Calu3 (cell line): ENCODE measurements at regions of chr22 and their contacts with region 1.

Region 1: DNA sequence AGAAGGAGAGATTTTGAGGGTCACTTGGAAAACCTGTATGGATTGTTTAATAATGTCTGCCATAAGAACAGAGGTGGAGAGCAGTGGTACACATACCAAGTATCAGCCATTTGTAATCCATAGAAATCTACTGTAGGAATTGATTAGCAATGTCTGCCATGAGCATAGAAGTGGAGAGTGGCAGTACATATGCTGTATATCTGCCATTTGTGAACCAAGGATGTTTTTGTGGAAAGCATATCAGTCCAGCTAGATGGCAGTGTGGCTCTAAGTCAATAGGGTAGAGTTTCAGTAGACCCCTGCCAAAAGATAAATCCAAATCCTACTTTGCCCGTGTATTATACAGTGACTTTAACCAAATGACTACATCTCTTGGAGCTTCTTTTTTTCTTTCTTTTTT is 82.9 kb upstream of the SEZ6L start:
- DNase-seq: no peak
- H3K4me3 Mint-ChIP-seq: no peak overlapping the region
- H3K27ac Mint-ChIP-seq: no peak overlapping the region
- H3K4me1 Mint-ChIP-seq: no peaks in the 10 kb centered on the region
- H3K27me3 Mint-ChIP-seq: peaks cover 33% of the 10 kb centered on the region
- CTCF ChIP-seq: no peak

Region 2: GRCh38 chr22:26038365-26038764 is 48.0 kb before region 1 on chr22:
- CTCF ChIA-PET with region 1: no interaction called
- intact Hi-C with region 1: no loop called
- DNase-seq: no peak
- H3K4me3 Mint-ChIP-seq: no peak overlapping the region
- H3K27ac Mint-ChIP-seq: no peak overlapping the region
- H3K4me1 Mint-ChIP-seq: no peaks in the 10 kb centered on the region
- H3K27me3 Mint-ChIP-seq: peaks cover 47% of the 10 kb centered on the region
- CTCF ChIP-seq: no peak

Region 3: DNA sequence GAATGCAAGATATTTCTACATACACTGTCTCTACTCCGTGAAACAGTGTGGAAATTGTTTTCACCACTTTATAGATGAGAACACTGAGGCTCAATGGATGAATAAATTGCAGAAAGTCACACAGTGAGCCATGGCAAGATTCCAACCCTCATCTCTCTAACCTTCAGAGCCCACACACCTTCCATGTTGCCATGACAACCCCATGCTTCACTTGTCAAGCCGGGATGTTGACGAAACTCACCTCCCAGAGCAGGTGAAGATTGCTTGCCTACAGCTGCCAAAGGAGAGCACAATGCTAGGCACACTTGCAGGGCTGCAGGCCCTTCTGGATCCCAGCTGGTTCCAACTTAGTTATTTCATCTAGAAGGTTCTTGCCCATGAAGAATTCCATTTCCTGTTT is 11.5 kb after region 1 on chr22:
- CTCF ChIA-PET with region 1: no interaction called
- intact Hi-C with region 1: no loop called
- DNase-seq: no peak
- H3K4me3 Mint-ChIP-seq: no peak overlapping the region
- H3K27ac Mint-ChIP-seq: no peak overlapping the region
- H3K4me1 Mint-ChIP-seq: no peaks in the 10 kb centered on the region
- H3K27me3 Mint-ChIP-seq: peaks cover 90% of the 10 kb centered on the region
- CTCF ChIP-seq: no peak

Region 4: DNA sequence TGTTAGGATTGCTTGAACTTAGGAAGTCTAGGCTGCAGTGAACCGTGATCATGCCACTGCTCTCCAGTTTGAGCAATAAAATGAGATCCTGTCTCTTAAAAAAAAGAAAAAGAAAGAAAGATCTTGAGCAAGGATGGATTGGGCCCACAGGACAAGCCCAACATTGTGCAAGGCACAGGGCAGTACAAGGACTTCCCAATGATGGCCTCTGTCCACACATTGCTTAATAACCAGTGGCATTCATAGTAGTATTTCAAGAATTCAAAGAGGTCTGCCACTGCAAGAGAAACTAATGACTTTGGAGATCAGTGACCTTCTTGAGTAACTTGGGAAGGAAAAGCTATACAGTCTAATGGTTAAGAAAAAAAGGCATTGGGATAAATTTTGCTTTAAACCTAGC is 127.5 kb after region 1 on chr22:
- CTCF ChIA-PET with region 1: no interaction called
- intact Hi-C with region 1: no loop called
- DNase-seq: no peak
- H3K4me3 Mint-ChIP-seq: no peak overlapping the region
- H3K27ac Mint-ChIP-seq: no peak overlapping the region
- H3K4me1 Mint-ChIP-seq: no peaks in the 10 kb centered on the region
- H3K27me3 Mint-ChIP-seq: peaks cover 98% of the 10 kb centered on the region
- CTCF ChIP-seq: no peak

Region 5: DNA sequence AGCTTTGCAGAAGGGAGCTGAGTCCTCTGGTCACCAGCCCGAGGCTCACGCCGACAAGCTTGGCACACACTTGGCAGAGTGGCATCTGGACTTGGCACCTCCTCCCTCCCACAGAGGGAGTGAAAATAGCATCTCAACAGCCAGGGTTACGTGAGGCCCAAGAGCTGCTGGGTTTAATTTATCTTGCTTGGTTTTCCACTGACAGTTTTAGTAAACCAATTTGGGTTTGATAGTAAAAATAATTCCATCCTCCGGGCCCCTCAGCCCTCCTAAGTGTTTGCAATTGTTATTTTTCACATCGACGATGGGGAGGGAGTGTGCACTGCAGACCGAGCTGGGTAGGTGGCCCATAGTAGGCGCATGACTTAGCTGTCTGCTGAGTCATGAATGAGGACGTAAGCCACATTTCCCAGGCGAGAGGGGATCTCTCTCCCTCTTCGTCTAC is 235.1 kb after region 1 on chr22:
- CTCF ChIA-PET with region 1: interaction called, 3 read pairs
- intact Hi-C with region 1: loop called (anchors 10 kb)
- DNase-seq: no peak
- H3K4me3 Mint-ChIP-seq: no peak overlapping the region
- H3K27ac Mint-ChIP-seq: no peak overlapping the region
- H3K4me1 Mint-ChIP-seq: no peaks in the 10 kb centered on the region
- H3K27me3 Mint-ChIP-seq: peaks cover 99% of the 10 kb centered on the region
- CTCF ChIP-seq: no peak